ENCODE measurements at regions of chr1 and their contacts with region 1.

Region 1: DNA sequence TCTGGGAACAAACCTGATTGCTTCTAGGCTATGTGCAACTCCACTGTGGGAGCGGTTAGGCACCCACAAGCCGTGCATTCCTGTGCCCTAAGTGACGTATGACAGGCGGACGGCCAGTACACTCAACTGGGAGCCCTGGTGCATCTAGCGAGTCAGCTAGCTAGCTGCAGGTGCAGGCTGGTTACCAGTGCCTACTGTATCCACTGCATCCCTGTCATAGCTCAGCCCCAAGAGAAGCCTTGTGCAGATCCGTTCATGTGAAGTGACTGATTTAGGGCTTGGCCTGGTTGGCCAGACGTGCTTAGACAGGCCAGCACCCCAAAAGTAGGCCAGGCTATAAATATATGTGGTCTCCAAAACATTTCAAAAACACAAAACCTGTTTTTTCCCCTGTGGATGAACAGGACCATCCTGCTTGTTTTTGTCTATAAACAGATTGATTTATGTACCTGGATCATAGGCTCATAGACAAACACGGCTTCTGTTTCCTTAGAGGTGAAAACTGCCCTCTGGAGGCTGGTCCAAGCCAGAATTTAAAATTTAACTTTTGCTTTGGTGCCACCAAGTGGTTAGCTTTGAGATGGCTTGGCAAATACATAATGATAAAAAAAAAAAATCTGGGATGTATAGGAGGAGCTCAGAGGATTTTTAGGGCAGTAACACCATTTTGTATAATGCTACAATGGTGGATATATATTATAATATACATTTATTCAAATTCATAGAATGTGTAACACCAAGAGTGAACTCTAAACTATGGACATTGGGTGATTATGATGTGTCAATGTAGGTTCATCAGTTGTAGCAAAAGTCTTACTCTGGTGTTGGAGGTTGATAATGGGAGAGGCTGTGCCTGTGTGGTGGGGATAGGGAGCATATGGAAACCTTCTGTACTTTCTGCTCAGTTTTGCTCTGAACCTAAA is 68.5 kb downstream of the GIPC2 start:
- DNase-seq: peak; percentile 52 to 70 (median 61)
- H3K4me3 ChIP-seq: no peak overlapping the region
- H3K4me3 Mint-ChIP-seq: no peak overlapping the region
- H3K27ac ChIP-seq: no peak overlapping the region
- H3K27ac Mint-ChIP-seq: peak overlapping the region in 1 of 7 donors; percentile 7
- H3K4me1 ChIP-seq: no peaks in the 10 kb centered on the region
- H3K4me1 Mint-ChIP-seq: no peaks in the 10 kb centered on the region
- H3K27me3 ChIP-seq: no peaks in the 10 kb centered on the region
- H3K27me3 Mint-ChIP-seq: no peaks in the 10 kb centered on the region

Region 2: GRCh38 chr1:76901158-76901767 is 1213.0 kb before region 1 on chr1:
- CTCF ChIA-PET with region 1: no interaction called
- POLR2A ChIA-PET with region 1: no interaction called
- intact Hi-C with region 1: loop called (anchors 5 kb)
- DNase-seq: peak in 4 of 5 donors; percentile 10 to 19 (median 16)
- H3K4me3 ChIP-seq: no peak overlapping the region
- H3K4me3 Mint-ChIP-seq: no peak overlapping the region
- H3K27ac ChIP-seq: no peak overlapping the region
- H3K27ac Mint-ChIP-seq: no peak overlapping the region
- H3K4me1 ChIP-seq: no peaks in the 10 kb centered on the region
- H3K4me1 Mint-ChIP-seq: no peaks in the 10 kb centered on the region
- H3K27me3 ChIP-seq: no peaks in the 10 kb centered on the region
- H3K27me3 Mint-ChIP-seq: peaks cover 0 to 2% of the 10 kb centered on the region in 2 donors

Region 3: GRCh38 chr1:77725706-77726105 is 388.6 kb before region 1 on chr1:
- CTCF ChIA-PET with region 1: no interaction called
- POLR2A ChIA-PET with region 1: no interaction called
- intact Hi-C with region 1: loop called (anchors 10 kb)
- DNase-seq: no peak
- H3K4me3 ChIP-seq: no peak overlapping the region
- H3K4me3 Mint-ChIP-seq: no peak overlapping the region
- H3K27ac ChIP-seq: no peak overlapping the region
- H3K27ac Mint-ChIP-seq: no peak overlapping the region
- H3K4me1 ChIP-seq: no peaks in the 10 kb centered on the region
- H3K4me1 Mint-ChIP-seq: peaks cover 0 to 4% (median under 1%) of the 10 kb centered on the region in 4 donors
- H3K27me3 ChIP-seq: no peaks in the 10 kb centered on the region
- H3K27me3 Mint-ChIP-seq: no peaks in the 10 kb centered on the region

Region 4: GRCh38 chr1:77825131-77825709 is 289.1 kb before region 1 on chr1:
- CTCF ChIA-PET with region 1: interaction called, 13 read pairs
- POLR2A ChIA-PET with region 1: no interaction called
- intact Hi-C with region 1: no loop called
- DNase-seq: no peak
- H3K4me3 ChIP-seq: no peak overlapping the region
- H3K4me3 Mint-ChIP-seq: peak overlapping the region in 1 of 8 donors; percentile 36
- H3K27ac ChIP-seq: no peak overlapping the region
- H3K27ac Mint-ChIP-seq: no peak overlapping the region
- H3K4me1 ChIP-seq: no peaks in the 10 kb centered on the region
- H3K4me1 Mint-ChIP-seq: peaks cover 0 to 4% (median 2%) of the 10 kb centered on the region in 4 donors
- H3K27me3 ChIP-seq: no peaks in the 10 kb centered on the region
- H3K27me3 Mint-ChIP-seq: no peaks in the 10 kb centered on the region

Region 5: DNA sequence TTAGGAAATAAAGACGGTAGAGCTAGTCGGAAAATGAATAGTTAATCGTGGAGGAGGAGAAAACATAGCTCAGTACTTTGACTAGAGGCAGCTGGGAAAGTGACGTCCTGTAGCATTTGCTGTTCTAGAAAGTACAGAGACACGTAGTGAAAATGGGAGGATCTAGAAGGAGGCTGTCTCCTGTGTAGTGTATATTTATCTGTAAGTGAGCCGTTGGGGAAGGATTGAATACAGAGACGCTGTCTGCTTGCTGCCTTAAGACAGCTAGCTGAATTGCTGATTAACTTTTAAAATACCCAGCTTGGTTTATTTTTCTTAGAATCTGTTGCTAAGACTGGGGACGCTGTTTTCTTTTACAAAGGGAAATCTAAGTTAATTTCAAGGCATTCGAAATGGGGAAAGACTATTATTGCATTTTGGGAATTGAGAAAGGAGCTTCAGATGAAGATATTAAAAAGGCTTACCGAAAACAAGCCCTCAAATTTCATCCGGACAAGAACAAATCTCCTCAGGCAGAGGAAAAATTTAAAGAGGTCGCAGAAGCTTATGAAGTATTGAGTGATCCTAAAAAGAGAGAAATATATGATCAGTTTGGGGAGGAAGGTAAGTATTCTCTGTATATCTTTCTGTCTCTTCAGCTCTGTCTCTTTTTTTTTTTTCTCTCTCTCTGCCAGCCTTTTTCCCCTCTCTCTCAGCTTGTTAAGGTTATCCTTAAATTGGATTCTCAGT is 109.4 kb before region 1 on chr1 and contains the start of gene DNAJB4:
- CTCF ChIA-PET with region 1: interaction called, 5 read pairs
- POLR2A ChIA-PET with region 1: interaction called, 3 read pairs
- intact Hi-C with region 1: loop called (anchors 1 kb)
- DNase-seq: peak; percentile 80 to 90 (median 89)
- H3K4me3 ChIP-seq: peak within 1 kb of the TSS; percentile 73 to 85
- H3K4me3 Mint-ChIP-seq: peak within 1 kb of the TSS; percentile 78 to 95 (median 90)
- H3K27ac ChIP-seq: peak within 1 kb of the TSS; percentile 72
- H3K27ac Mint-ChIP-seq: peak within 1 kb of the TSS; percentile 96 to 99 (median 98)
- H3K4me1 ChIP-seq: peaks cover 31% of the 10 kb centered on the region
- H3K4me1 Mint-ChIP-seq: peaks cover 16 to 48% (median 26%) of the 10 kb centered on the region in 4 donors
- H3K27me3 ChIP-seq: no peaks in the 10 kb centered on the region
- H3K27me3 Mint-ChIP-seq: no peaks in the 10 kb centered on the region
- total RNA-seq, gene DNAJB4: 15.5 to 18.3 TPM

Region 6: GRCh38 chr1:78132174-78132947 is 18.1 kb after region 1 on chr1:
- CTCF ChIA-PET with region 1: interaction called, 26 read pairs
- POLR2A ChIA-PET with region 1: no interaction called
- intact Hi-C with region 1: no loop called
- DNase-seq: no peak
- H3K4me3 ChIP-seq: no peak overlapping the region
- H3K4me3 Mint-ChIP-seq: no peak overlapping the region
- H3K27ac ChIP-seq: no peak overlapping the region
- H3K27ac Mint-ChIP-seq: no peak overlapping the region
- H3K4me1 ChIP-seq: no peaks in the 10 kb centered on the region
- H3K4me1 Mint-ChIP-seq: no peaks in the 10 kb centered on the region
- H3K27me3 ChIP-seq: no peaks in the 10 kb centered on the region
- H3K27me3 Mint-ChIP-seq: no peaks in the 10 kb centered on the region

Region 7: GRCh38 chr1:78263459-78263858 is 149.2 kb after region 1 on chr1:
- CTCF ChIA-PET with region 1: no interaction called
- POLR2A ChIA-PET with region 1: no interaction called
- intact Hi-C with region 1: no loop called
- DNase-seq: no peak
- H3K4me3 ChIP-seq: no peak overlapping the region
- H3K4me3 Mint-ChIP-seq: no peak overlapping the region
- H3K27ac ChIP-seq: no peak overlapping the region
- H3K27ac Mint-ChIP-seq: no peak overlapping the region
- H3K4me1 ChIP-seq: no peaks in the 10 kb centered on the region
- H3K4me1 Mint-ChIP-seq: no peaks in the 10 kb centered on the region
- H3K27me3 ChIP-seq: no peaks in the 10 kb centered on the region
- H3K27me3 Mint-ChIP-seq: peaks cover 0 to 5% of the 10 kb centered on the region in 2 donors

Region 8: DNA sequence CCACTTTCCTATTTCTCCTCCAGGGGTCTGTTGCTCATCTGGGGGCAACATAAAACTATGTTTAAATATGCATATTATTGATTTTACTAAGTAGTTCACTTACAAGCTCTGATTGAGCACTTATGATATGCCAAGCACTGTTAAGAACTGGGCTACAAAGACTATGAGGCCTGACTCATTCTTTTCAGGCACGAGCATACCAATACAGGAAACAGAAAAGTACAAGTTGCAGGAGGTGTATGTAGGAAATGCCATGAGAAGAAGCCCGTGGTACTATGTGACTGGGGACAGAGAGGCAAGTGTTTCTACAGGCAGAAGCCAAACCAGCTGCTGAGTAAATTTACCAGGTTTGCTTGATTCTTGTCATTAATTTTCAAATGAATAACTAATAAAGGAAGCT is 256.1 kb after region 1 on chr1:
- CTCF ChIA-PET with region 1: no interaction called
- POLR2A ChIA-PET with region 1: no interaction called
- intact Hi-C with region 1: no loop called
- DNase-seq: no peak
- H3K4me3 ChIP-seq: no peak overlapping the region
- H3K4me3 Mint-ChIP-seq: no peak overlapping the region
- H3K27ac ChIP-seq: no peak overlapping the region
- H3K27ac Mint-ChIP-seq: no peak overlapping the region
- H3K4me1 ChIP-seq: no peaks in the 10 kb centered on the region
- H3K4me1 Mint-ChIP-seq: no peaks in the 10 kb centered on the region
- H3K27me3 ChIP-seq: no peaks in the 10 kb centered on the region
- H3K27me3 Mint-ChIP-seq: peaks cover 0 to 3% of the 10 kb centered on the region in 2 donors